Endothelial cell of umbilical vein (primary cell): ENCODE measurements at regions of chr9 and their contacts with region 1.

Region 1: DNA sequence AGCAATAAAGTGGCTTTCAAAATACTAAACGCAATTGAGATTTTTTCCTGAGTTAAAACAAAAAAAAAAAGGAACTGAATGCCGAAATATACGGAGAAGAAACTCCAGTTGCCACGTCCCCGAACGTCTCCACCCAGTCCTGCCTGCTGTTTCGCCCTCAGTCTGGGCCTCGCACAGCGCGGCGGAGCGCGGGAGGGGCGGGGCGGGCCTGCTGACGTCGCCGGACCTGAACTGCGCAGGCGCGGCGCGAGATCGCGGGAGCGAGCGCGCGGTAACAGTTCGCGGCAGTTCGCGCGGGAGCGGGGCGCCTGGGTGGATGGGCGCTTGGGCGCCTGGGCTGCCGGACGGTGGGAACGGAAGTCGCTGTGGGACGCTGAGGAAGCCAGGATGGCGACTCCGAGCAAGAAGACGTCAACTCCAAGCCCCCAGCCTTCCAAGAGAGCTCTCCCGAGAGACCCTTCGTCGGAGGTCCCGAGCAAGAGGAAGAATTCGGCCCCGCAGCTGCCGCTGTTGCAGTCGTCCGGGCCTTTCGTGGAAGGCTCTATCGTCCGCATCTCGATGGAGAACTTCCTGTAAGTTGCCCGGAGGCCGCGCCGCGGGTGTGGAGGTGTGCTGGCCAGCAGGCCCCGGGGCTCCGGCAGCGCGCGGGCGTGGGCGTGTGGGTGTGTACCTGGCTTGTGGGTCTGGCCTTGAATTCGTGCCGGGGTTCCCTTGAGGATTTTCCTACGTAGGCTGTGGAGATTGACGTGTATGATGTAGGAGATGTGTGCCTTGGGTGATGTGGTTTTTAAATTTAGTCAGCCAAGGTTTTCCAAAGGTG is at the start of gene SMC5:
- DNase-seq: peak; percentile 95
- H3K4me3 ChIP-seq: peak within 1 kb of the TSS; percentile 74 to 95 (median 87)
- H3K27ac ChIP-seq: peak within 1 kb of the TSS; percentile 93
- H3K4me1 ChIP-seq: peaks cover 40% of the 10 kb centered on the region
- H3K27me3 ChIP-seq: no peaks in the 10 kb centered on the region
- CTCF ChIP-seq: no peak
- POLR2A ChIP-seq: peak; percentile 95
- total RNA-seq, gene SMC5: 24.3 and 32.8 TPM in 2 replicates

Region 2: GRCh38 chr9:69963803-69964202 is 295.1 kb before region 1 on chr9:
- CTCF ChIA-PET with region 1: no interaction called
- POLR2A ChIA-PET with region 1: no interaction called
- dilution Hi-C with region 1: no loop called
- intact Hi-C with region 1: no loop called
- DNase-seq: no peak
- H3K4me3 ChIP-seq: no peak overlapping the region
- H3K27ac ChIP-seq: no peak overlapping the region
- H3K4me1 ChIP-seq: no peaks in the 10 kb centered on the region
- H3K27me3 ChIP-seq: no peaks in the 10 kb centered on the region
- CTCF ChIP-seq: no peak
- POLR2A ChIP-seq: no peak

Region 3: DNA sequence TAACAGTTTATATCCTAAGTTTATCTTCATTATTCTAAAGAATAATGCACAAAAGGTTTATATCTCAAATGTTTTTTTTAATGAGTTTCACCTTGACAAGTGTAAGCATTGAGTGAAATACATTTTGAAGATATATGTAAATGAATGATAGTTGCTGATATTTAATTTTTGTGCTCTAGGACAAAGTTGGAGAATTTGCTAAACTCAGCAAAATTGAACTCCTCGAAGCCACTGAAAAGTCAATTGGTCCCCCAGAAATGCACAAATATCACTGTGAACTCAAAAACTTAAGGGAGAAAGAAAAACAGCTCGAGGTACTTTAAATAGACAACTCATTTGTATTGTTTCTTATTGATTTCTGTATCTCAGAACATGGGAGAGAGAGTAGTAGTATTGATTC is 19.4 kb after region 1 on chr9:
- CTCF ChIA-PET with region 1: interaction called, 4 read pairs
- POLR2A ChIA-PET with region 1: no interaction called
- dilution Hi-C with region 1: no loop called
- intact Hi-C with region 1: loop called (anchors 2 kb)
- DNase-seq: no peak
- H3K4me3 ChIP-seq: no peak overlapping the region
- H3K27ac ChIP-seq: no peak overlapping the region
- H3K4me1 ChIP-seq: no peaks in the 10 kb centered on the region
- H3K27me3 ChIP-seq: no peaks in the 10 kb centered on the region
- CTCF ChIP-seq: no peak
- POLR2A ChIP-seq: no peak

Region 4: GRCh38 chr9:70291413-70291812 is 32.5 kb after region 1 on chr9:
- CTCF ChIA-PET with region 1: no interaction called
- POLR2A ChIA-PET with region 1: no interaction called
- dilution Hi-C with region 1: no loop called
- intact Hi-C with region 1: loop called (anchors 1 kb)
- DNase-seq: peak; percentile 39
- H3K4me3 ChIP-seq: no peak overlapping the region
- H3K27ac ChIP-seq: peak overlapping the region; percentile 39
- H3K4me1 ChIP-seq: peaks cover 2% of the 10 kb centered on the region
- H3K27me3 ChIP-seq: no peaks in the 10 kb centered on the region
- CTCF ChIP-seq: no peak
- POLR2A ChIP-seq: no peak